ENCODE measurements at regions of chr15 and their contacts with region 1.

Region 1: GRCh38 chr15:68304589-68305337 is 27.2 kb downstream of the FEM1B start:
- DNase-seq: peak in 1 of 2 donors; percentile 62
- H3K4me3 ChIP-seq: no peak overlapping the region
- H3K27ac ChIP-seq: peak overlapping the region; percentile 61 to 85
- H3K4me1 ChIP-seq: peaks cover 3 to 32% of the 10 kb centered on the region in 2 donors
- H3K27me3 ChIP-seq: no peaks in the 10 kb centered on the region
- CTCF ChIP-seq: no peak

Region 2: DNA sequence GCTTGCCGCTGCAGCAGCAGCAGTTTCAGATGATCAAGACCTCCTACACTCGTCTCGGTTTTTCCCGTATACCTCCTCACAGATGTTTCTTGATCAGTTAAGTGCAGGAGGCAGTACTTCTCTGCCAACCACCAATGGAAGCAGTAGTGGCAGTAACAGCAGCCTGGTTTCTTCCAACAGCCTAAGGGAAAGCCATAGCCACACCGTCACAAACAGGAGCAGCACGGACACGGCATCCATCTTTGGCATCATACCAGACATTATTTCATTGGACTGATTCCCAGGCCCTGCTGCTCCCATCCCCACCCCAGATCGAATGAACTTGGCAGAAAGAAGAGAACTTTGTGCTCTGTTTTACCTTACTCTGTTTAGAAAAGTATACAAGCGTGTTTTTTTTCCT is 117.2 kb before region 1 on chr15:
- intact Hi-C with region 1: no loop called
- DNase-seq: no peak
- H3K4me3 ChIP-seq: no peak overlapping the region
- H3K27ac ChIP-seq: peak overlapping the region; percentile 3 to 37
- H3K4me1 ChIP-seq: peaks cover 8 to 19% of the 10 kb centered on the region in 2 donors
- H3K27me3 ChIP-seq: no peaks in the 10 kb centered on the region
- CTCF ChIP-seq: no peak

Region 3: DNA sequence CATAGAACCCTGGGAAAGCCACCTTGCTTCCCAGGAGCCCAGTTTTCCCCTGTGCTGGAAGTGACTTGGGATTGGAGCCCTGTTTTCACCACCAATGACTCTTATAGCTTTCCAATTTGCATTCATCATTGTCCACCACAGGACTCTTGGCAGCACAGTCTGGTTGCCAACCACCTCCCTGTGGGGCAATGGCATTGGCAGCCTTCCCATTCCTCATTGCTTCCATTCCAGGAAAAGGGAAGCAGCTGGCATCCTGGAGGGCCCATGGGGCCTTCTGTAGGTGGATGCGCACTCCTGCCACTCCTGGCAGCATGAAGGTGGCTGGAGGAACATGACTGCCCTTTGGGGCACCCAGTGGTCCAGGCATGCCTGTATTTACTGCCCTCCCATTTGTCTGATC is 30.5 kb after region 1 on chr15:
- intact Hi-C with region 1: loop called (anchors 2 kb)
- DNase-seq: peak; percentile 53 to 94
- H3K4me3 ChIP-seq: no peak overlapping the region
- H3K27ac ChIP-seq: peak overlapping the region; percentile 96 to 98
- H3K4me1 ChIP-seq: peaks cover 29 to 59% of the 10 kb centered on the region in 2 donors
- H3K27me3 ChIP-seq: no peaks in the 10 kb centered on the region
- CTCF ChIP-seq: no peak

Region 4: DNA sequence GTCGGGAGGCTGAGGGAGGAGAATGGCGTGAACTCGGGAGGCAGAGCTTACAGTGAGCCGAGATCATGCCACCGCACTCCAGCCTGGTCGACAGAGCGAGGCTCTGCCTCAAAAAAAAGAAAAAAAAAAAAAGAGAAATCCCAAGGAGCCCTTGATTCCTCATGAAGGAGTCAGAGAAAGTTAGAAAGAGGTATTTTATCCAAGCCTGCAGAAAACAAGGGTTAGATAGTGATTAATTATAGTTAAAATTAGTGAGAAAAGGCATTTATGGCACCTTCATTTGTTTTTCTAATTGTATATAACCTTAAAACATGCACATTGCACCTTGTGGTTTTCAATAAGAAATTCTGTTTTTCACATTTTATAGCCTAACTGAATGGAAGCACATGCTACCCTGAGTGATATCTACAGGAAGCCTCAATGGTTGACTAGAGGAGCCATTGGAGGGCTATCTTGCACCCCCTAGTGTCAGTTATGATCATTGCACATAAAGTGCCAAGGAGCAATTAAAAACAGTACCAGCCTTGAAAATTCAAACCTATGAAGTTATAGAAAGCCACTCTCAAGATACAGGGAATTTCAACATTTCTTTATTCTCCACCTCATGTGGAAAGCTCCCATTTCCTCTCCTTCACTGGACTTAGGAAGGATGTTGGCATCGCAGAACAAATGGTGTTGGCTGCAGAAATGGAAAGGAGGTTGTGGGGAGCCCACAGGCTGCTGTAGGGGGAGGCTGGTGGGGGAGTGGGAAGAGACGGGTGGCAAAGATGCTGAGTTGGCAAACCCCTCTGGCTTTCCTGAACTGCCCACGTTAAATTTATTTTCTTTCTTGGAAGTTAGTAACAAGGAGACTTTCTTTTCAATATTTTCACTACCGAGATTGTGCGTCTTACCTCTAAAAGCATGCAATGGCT is 78.7 kb after region 1 on chr15:
- intact Hi-C with region 1: loop called (anchors 5 kb)
- DNase-seq: peak in 1 of 2 donors; percentile 62
- H3K4me3 ChIP-seq: no peak overlapping the region
- H3K27ac ChIP-seq: peak overlapping the region; percentile 73 to 80
- H3K4me1 ChIP-seq: peaks cover 8 to 27% of the 10 kb centered on the region in 2 donors
- H3K27me3 ChIP-seq: no peaks in the 10 kb centered on the region
- CTCF ChIP-seq: peak; percentile 55 to 64 (median 61)

Region 5: GRCh38 chr15:68464448-68465090 is 159.8 kb after region 1 on chr15:
- intact Hi-C with region 1: no loop called
- DNase-seq: no peak
- H3K4me3 ChIP-seq: no peak overlapping the region
- H3K27ac ChIP-seq: no peak overlapping the region
- H3K4me1 ChIP-seq: peaks cover 0 to 12% of the 10 kb centered on the region in 2 donors
- H3K27me3 ChIP-seq: no peaks in the 10 kb centered on the region
- CTCF ChIP-seq: no peak

Region 6: GRCh38 chr15:68479406-68479805 is 174.6 kb after region 1 on chr15:
- intact Hi-C with region 1: loop called (anchors 5 kb)
- DNase-seq: peak in 1 of 2 donors; percentile 92
- H3K4me3 ChIP-seq: no peak overlapping the region
- H3K27ac ChIP-seq: peak overlapping the region; percentile 85
- H3K4me1 ChIP-seq: peaks cover 5 to 24% of the 10 kb centered on the region in 2 donors
- H3K27me3 ChIP-seq: no peaks in the 10 kb centered on the region
- CTCF ChIP-seq: no peak

Region 7: DNA sequence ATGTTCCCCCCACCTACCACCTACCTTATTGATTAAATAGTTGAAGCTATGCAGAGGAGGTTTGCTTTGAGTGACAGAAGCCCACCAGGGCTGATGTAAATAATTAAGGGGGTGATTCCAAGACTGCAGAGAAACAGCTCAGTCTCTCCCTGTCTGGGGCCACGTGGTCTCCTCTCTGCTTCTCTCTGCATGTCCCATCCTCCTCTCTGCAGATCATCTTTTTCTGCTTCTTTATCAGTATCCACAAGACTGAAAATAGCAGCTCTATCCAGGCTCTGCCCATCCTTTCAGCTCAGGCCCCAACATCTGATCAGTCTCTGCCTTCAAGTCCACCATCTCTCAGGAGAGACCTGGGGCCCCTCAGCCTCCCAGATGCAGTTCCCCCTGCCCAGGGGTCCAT is 405.1 kb after region 1 on chr15:
- intact Hi-C with region 1: no loop called
- DNase-seq: no peak
- H3K4me3 ChIP-seq: no peak overlapping the region
- H3K27ac ChIP-seq: no peak overlapping the region
- H3K4me1 ChIP-seq: no peaks in the 10 kb centered on the region
- H3K27me3 ChIP-seq: no peaks in the 10 kb centered on the region
- CTCF ChIP-seq: no peak